ENCODE measurements at regions of chr22 and their contacts with region 1.

Region 1: GRCh38 chr22:36123673-36124630 is 36.6 kb downstream of the APOL3 start:
- DNase-seq: peak; percentile 97 to 98
- ATAC-seq: peak; percentile 98
- H3K4me3 ChIP-seq: no peak overlapping the region
- H3K27ac ChIP-seq: peak overlapping the region in 1 of 2 donors; percentile 73
- H3K4me1 ChIP-seq: no peaks in the 10 kb centered on the region
- H3K27me3 ChIP-seq: no peaks in the 10 kb centered on the region

Region 2: DNA sequence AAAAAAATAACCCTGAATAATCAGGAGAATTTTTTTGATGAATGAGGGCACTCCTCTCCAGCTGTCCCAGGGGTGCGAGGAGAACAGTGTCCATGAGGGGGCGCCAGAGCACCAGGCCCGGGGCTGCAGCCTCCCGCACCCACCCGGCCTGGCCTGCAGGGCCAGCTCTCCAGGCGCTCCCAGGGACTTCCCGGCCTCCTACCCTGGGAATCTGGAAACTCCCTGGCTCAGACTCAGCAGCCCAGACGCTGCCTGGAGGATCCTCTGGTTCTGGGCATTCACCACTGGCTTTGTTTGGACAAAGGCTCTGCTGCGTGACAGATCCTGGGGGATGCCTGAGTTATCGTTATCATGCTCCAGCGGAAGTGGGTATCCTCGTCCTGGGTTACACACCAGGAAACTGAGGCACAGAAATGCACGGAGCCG is 693.0 kb before region 1 on chr22:
- intact Hi-C with region 1: loop called (anchors 10 kb)
- DNase-seq: peak; percentile 94 to 97
- ATAC-seq: peak; percentile 95
- H3K4me3 ChIP-seq: no peak overlapping the region
- H3K27ac ChIP-seq: no peak overlapping the region
- H3K4me1 ChIP-seq: no peaks in the 10 kb centered on the region
- H3K27me3 ChIP-seq: no peaks in the 10 kb centered on the region

Region 3: DNA sequence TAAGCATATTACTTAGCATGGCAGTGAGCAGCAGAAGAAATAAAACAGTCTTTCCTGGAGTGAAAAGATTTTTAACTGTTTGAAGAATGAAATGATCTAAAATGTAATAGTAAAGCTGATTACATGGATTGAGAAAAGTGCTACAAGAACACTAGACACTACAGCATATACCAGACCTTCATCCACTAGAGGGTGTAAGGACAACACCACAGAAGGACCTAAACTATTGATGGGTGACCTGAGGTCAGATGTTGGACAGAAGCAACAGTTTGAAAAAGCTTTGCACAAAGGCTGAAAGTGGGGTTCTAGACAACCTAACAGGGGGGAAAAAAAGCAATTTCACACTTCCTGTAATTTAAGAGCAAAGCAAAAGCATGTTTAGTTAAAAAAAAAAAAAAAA is 193.0 kb before region 1 on chr22:
- intact Hi-C with region 1: loop called (anchors 2 to 5 kb)
- DNase-seq: no peak
- ATAC-seq: peak; percentile 89
- H3K4me3 ChIP-seq: no peak overlapping the region
- H3K27ac ChIP-seq: no peak overlapping the region
- H3K4me1 ChIP-seq: no peaks in the 10 kb centered on the region
- H3K27me3 ChIP-seq: no peaks in the 10 kb centered on the region